CD4-positive, alpha-beta T cell (primary cell): ENCODE measurements at regions of chr3 and their contacts with region 1.

Region 1: DNA sequence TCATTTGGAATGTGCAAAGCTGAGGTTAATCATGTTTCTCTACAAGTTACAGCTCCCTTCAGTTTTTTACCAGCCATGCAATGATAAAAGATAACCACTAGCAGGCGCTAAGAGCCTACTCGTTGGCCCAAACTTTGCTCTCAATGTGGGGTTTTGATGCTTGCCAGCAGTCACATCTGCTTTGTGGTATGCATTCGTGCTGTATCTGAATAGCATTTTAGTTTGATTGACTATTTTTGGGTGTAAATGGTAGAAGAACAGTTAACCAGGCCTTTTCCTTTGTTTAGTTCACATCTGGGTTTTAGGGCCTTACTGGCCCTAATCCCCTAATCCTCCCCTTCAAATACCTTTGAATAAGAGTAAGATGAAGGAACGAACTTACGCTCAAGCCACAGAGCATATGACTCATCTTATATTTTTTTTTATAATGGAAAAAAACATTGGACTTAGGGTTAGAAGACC is 4.4 kb upstream of the CLDN11 start:
- DNase-seq: peak in 7 of 14 experiments; percentile 7 to 70 (median 45)
- ATAC-seq: peak; percentile 78
- H3K4me3 ChIP-seq: no peak overlapping the region
- H3K4me3 Mint-ChIP-seq: no peak overlapping the region
- H3K27ac ChIP-seq: no peak overlapping the region
- H3K27ac Mint-ChIP-seq: no peak overlapping the region
- H3K4me1 ChIP-seq: peaks cover 10% of the 10 kb centered on the region
- H3K4me1 Mint-ChIP-seq: peaks cover 5% of the 10 kb centered on the region
- H3K27me3 ChIP-seq: peaks cover 13 to 14% of the 10 kb centered on the region in 2 experiments
- H3K27me3 Mint-ChIP-seq: peaks cover 40% of the 10 kb centered on the region
- CTCF ChIP-seq: peak; percentile 81

Region 2: GRCh38 chr3:170189398-170190256 is 224.6 kb before region 1 on chr3:
- CTCF ChIA-PET with region 1: interaction called, 3 read pairs
- POLR2A ChIA-PET with region 1: no interaction called
- intact Hi-C with region 1: loop called (anchors 2 to 5 kb)
- DNase-seq: no peak
- ATAC-seq: peak; percentile 16
- H3K4me3 ChIP-seq: no peak overlapping the region
- H3K4me3 Mint-ChIP-seq: no peak overlapping the region
- H3K27ac ChIP-seq: no peak overlapping the region
- H3K27ac Mint-ChIP-seq: no peak overlapping the region
- H3K4me1 ChIP-seq: peaks cover 10% of the 10 kb centered on the region
- H3K4me1 Mint-ChIP-seq: peaks cover 11% of the 10 kb centered on the region
- H3K27me3 ChIP-seq: no peaks in the 10 kb centered on the region
- H3K27me3 Mint-ChIP-seq: no peaks in the 10 kb centered on the region
- CTCF ChIP-seq: no peak

Region 3: DNA sequence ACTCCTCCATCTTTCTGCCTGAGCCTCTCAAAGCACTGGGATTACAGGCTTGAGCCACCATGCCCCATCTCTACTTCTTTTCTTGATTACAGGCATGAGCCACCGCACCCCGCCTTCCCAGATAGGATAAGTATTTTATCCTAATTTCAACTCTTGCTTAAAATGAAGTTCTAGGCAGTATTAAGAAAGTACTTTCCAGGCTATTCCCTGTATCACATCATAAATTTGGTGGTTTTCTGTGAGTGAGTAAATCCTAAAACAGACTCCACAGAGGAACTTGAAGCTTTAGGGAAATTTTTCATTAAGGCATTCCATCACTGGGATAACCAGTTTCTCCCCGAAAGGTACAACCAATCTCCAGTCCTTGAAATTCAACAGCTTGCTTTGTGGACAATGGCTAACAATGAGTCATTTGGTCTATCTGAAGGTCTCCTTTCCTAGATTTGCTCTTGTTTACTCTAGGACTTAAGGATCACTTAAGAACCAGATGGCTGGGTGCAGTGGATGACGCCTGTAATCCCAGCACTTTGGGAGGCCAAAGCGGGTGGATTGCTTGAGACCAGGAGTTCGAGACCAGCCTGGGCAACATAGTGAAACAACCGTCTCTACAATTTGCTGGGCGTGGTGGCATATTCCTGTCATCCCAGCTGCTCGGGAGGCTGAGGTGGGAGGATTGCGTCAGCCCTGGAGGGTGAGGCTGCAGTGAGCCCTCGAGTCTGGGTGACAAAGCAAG is 106.4 kb before region 1 on chr3:
- CTCF ChIA-PET with region 1: interaction called, 5 read pairs
- POLR2A ChIA-PET with region 1: no interaction called
- intact Hi-C with region 1: loop called (anchors 1 to 2 kb)
- DNase-seq: no peak
- ATAC-seq: no peak
- H3K4me3 ChIP-seq: no peak overlapping the region
- H3K4me3 Mint-ChIP-seq: no peak overlapping the region
- H3K27ac ChIP-seq: no peak overlapping the region
- H3K27ac Mint-ChIP-seq: no peak overlapping the region
- H3K4me1 ChIP-seq: no peaks in the 10 kb centered on the region
- H3K4me1 Mint-ChIP-seq: no peaks in the 10 kb centered on the region
- H3K27me3 ChIP-seq: no peaks in the 10 kb centered on the region
- H3K27me3 Mint-ChIP-seq: no peaks in the 10 kb centered on the region
- CTCF ChIP-seq: no peak

Region 4: DNA sequence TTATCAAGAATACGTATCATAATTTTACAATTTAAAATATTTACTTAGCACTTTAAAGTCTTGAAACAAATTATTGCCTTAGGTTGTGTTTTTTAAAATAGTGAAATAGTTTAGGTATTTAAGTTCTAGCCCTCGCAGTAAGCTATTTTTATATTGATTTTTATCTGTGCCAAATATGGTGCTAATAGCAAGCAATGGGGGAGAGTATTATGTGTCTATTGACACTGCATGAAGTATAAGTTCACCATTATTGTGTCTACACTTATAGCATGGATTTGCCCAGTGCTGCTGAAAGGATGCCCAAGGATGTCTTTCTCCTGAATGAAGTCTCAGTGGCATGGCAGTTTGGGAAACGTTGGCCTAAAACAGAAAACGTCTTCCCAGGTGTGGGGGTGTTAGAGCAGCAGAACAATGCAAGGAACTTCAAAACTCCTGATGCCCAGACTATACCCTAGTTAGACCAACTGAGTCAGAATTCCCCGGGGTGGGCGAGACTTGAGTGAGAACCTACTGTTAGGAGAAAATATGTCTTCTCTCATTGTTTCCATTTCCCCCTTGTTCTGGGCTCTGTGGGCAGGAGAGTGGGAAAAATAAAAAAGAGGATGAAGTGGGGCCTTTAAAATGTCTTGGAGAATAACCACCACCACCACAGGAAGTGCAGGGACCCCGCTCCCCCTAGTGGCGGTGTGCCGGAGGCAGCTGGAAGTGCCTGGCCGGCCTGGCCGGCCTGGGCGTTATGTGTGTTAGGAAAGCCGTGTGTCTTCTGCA is 275.8 kb after region 1 on chr3:
- CTCF ChIA-PET with region 1: no interaction called
- POLR2A ChIA-PET with region 1: no interaction called
- intact Hi-C with region 1: loop called (anchors 1 to 2 kb)
- DNase-seq: peak; percentile 1 to 53 (median 18)
- ATAC-seq: no peak
- H3K4me3 ChIP-seq: no peak overlapping the region
- H3K4me3 Mint-ChIP-seq: no peak overlapping the region
- H3K27ac ChIP-seq: no peak overlapping the region
- H3K27ac Mint-ChIP-seq: no peak overlapping the region
- H3K4me1 ChIP-seq: no peaks in the 10 kb centered on the region
- H3K4me1 Mint-ChIP-seq: no peaks in the 10 kb centered on the region
- H3K27me3 ChIP-seq: no peaks in the 10 kb centered on the region
- H3K27me3 Mint-ChIP-seq: no peaks in the 10 kb centered on the region
- CTCF ChIP-seq: peak; percentile 57

Region 5: GRCh38 chr3:170811928-170812591 is 397.8 kb after region 1 on chr3:
- CTCF ChIA-PET with region 1: interaction called, 11 read pairs
- POLR2A ChIA-PET with region 1: interaction called, 3 read pairs
- intact Hi-C with region 1: loop called (anchors 1 kb)
- DNase-seq: peak; percentile 39 to 80 (median 54)
- ATAC-seq: peak; percentile 96
- H3K4me3 ChIP-seq: no peak overlapping the region
- H3K4me3 Mint-ChIP-seq: no peak overlapping the region
- H3K27ac ChIP-seq: no peak overlapping the region
- H3K27ac Mint-ChIP-seq: no peak overlapping the region
- H3K4me1 ChIP-seq: no peaks in the 10 kb centered on the region
- H3K4me1 Mint-ChIP-seq: no peaks in the 10 kb centered on the region
- H3K27me3 ChIP-seq: no peaks in the 10 kb centered on the region
- H3K27me3 Mint-ChIP-seq: no peaks in the 10 kb centered on the region
- CTCF ChIP-seq: peak; percentile 87

Region 6: DNA sequence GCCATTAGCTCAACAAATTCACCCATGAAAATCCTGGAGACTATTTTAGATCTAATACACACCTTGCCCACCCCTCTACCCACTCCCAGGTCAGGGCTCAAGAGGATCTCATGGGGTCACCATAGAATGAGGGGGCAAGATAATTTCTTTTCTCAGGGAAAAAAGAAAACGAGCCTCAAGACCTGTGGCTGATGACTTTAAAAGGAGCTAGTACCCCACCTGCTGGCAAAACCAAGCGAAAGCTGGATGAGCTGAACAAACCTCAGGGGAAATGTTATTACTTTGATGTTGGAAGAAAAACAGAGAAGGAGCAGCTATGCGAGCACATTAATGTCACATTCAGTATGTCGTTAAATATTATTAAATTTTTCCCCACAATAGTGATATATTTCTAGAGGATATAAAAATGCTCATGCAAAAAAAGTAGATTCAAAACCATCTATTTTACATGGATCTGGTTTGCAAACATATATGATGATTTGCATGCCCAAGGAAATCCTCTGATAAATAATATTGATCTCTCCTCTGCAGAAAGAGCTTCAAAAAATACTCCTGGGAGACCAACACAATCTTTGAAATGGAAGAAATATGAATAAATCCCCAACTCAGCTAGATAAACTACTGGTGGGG is 1358.3 kb after region 1 on chr3:
- CTCF ChIA-PET with region 1: interaction called, 3 read pairs
- POLR2A ChIA-PET with region 1: no interaction called
- intact Hi-C with region 1: loop called in 1 of 2 experiments (anchors 10 kb)
- DNase-seq: peak; percentile 6 to 66 (median 27)
- ATAC-seq: no peak
- H3K4me3 ChIP-seq: no peak overlapping the region
- H3K4me3 Mint-ChIP-seq: no peak overlapping the region
- H3K27ac ChIP-seq: no peak overlapping the region
- H3K27ac Mint-ChIP-seq: no peak overlapping the region
- H3K4me1 ChIP-seq: no peaks in the 10 kb centered on the region
- H3K4me1 Mint-ChIP-seq: no peaks in the 10 kb centered on the region
- H3K27me3 ChIP-seq: no peaks in the 10 kb centered on the region
- H3K27me3 Mint-ChIP-seq: peaks cover 8% of the 10 kb centered on the region
- CTCF ChIP-seq: peak; percentile 72